Posterior vena cava (tissue), 2 donors: ENCODE measurements at regions of chr22 and their contacts with region 1.

Region 1: DNA sequence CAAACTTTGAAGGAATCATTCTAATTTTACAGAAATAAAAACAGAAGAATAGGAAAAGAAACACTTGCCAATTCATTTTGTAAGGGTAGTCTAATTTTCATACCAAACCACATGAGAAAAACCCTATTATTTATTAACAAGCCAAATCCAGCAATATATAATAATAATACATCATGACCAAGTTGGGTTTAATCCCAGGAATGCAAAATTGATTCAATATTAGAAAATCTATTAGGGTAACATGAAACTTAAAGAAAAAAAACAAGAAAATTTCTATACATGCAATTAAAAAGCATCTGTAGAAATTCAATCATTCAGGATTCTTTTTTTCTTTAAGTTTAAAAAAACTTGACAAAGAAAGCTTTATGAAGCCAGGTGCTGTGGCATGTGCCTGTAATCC is 16.8 kb downstream of the MAPK1 start:
- DNase-seq: no peak

Region 2: GRCh38 chr22:21907638-21908522 is 57.2 kb after region 1 on chr22:
- intact Hi-C with region 1: loop called in 1 of 2 experiments (anchors 2 kb)
- DNase-seq: peak; percentile 19

Region 3: GRCh38 chr22:22019659-22020424 is 169.2 kb after region 1 on chr22:
- intact Hi-C with region 1: no loop called
- DNase-seq: no peak